ENCODE measurements at regions of chr3 and their contacts with region 1.

Region 1: DNA sequence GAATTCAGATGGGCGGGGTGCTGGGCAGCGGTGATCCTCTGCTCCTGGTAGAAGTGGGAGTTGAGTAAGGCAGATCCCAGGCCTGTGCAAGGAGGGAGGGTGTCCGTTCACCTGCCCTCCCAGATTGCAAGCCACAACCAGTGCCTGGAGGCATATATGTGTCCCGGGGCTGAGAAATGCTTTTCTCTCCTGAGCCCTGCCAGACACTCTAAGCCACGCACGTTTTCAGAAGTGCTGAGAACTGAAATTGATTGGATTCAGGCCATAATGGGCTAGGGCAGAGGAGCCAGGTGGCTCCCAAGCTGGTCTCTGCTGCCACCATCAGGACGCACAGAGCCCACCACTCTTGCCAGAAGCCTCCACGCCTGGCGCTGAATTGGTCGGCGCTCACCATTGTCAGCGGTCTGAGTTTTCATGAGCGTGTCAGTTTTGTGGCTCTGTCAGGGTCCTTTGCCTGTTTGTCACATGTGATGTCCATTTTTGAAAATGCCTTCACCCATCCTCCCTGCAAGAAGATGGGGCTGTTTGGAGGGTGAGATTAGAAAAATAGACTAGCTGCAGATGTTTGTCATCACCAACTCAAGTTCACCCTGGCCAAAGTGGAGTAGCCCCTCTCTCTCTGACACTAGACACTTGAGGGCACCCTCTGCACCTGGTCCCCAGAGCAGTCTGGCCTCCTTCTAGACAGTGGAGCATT is 15.4 kb upstream of the BFSP2 start:
- DNase-seq: peak; percentile 56 to 71
- H3K4me3 ChIP-seq: no peak overlapping the region
- H3K4me3 Mint-ChIP-seq: no peak overlapping the region
- H3K27ac Mint-ChIP-seq: no peak overlapping the region
- H3K4me1 ChIP-seq: no peaks in the 10 kb centered on the region
- H3K4me1 Mint-ChIP-seq: no peaks in the 10 kb centered on the region
- H3K27me3 ChIP-seq: no peaks in the 10 kb centered on the region
- H3K27me3 Mint-ChIP-seq: no peaks in the 10 kb centered on the region
- CTCF ChIP-seq: peak; percentile 72 to 88

Region 2: GRCh38 chr3:132535575-132536441 is 848.7 kb before region 1 on chr3:
- CTCF ChIA-PET with region 1: no interaction called
- POLR2A ChIA-PET with region 1: no interaction called
- intact Hi-C with region 1: loop called (anchors 10 kb)
- DNase-seq: peak; percentile 56 to 57
- H3K4me3 ChIP-seq: no peak overlapping the region
- H3K4me3 Mint-ChIP-seq: no peak overlapping the region
- H3K27ac Mint-ChIP-seq: no peak overlapping the region
- H3K4me1 ChIP-seq: no peaks in the 10 kb centered on the region
- H3K4me1 Mint-ChIP-seq: no peaks in the 10 kb centered on the region
- H3K27me3 ChIP-seq: no peaks in the 10 kb centered on the region
- H3K27me3 Mint-ChIP-seq: no peaks in the 10 kb centered on the region
- CTCF ChIP-seq: peak; percentile 59 to 63

Region 3: DNA sequence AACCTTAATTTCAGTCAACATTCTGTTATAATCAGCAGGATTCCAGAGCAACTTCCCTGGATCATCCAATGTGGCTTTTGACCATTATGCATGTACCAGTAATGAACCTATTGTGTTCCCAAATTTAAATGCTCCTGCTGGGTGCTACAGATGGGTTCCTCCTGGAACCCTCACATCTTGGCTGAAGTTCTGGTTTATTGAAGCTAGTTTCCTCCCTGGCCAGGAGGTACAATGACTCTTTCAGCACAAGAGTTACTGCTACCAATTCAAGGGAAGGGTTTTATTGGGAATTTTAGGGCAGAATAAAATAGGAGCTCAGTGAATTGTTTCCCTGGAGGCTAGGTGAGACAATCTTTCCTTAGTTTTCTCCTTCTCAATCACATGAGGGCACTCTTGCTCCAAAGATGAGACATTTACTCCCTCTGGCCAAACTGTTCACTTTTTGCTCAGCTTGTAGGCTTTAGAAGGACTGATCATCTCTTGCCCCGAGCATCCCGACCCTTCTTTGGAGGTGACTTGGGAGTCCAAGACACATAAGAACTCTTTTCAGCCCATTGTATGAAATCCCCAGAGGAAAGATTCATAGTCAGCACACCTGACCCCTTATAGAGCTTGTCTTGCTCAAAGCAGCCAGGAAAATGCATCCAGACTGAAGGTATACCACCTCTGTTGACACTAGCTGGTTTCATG is 653.4 kb before region 1 on chr3:
- CTCF ChIA-PET with region 1: interaction called, 6 read pairs
- POLR2A ChIA-PET with region 1: no interaction called
- intact Hi-C with region 1: loop called (anchors 2 kb)
- DNase-seq: peak in 1 of 2 experiments; percentile 47
- H3K4me3 ChIP-seq: no peak overlapping the region
- H3K4me3 Mint-ChIP-seq: no peak overlapping the region
- H3K27ac Mint-ChIP-seq: no peak overlapping the region
- H3K4me1 ChIP-seq: peaks cover 1% of the 10 kb centered on the region; the same call in 1 of the 2 replicates
- H3K4me1 Mint-ChIP-seq: no peaks in the 10 kb centered on the region
- H3K27me3 ChIP-seq: no peaks in the 10 kb centered on the region
- H3K27me3 Mint-ChIP-seq: peaks cover 8% of the 10 kb centered on the region
- CTCF ChIP-seq: peak in 1 of 2 experiments; percentile 44

Region 4: GRCh38 chr3:133271539-133271938 is 112.9 kb before region 1 on chr3:
- CTCF ChIA-PET with region 1: no interaction called
- POLR2A ChIA-PET with region 1: no interaction called
- intact Hi-C with region 1: loop called (anchors 5 kb)
- DNase-seq: no peak
- H3K4me3 ChIP-seq: no peak overlapping the region
- H3K4me3 Mint-ChIP-seq: no peak overlapping the region
- H3K27ac Mint-ChIP-seq: no peak overlapping the region
- H3K4me1 ChIP-seq: no peaks in the 10 kb centered on the region
- H3K4me1 Mint-ChIP-seq: no peaks in the 10 kb centered on the region
- H3K27me3 ChIP-seq: no peaks in the 10 kb centered on the region
- H3K27me3 Mint-ChIP-seq: peaks cover 8% of the 10 kb centered on the region
- CTCF ChIP-seq: no peak

Region 5: GRCh38 chr3:133426721-133427120 is 42.2 kb after region 1 on chr3:
- CTCF ChIA-PET with region 1: no interaction called
- POLR2A ChIA-PET with region 1: no interaction called
- intact Hi-C with region 1: loop called (anchors 1 kb)
- DNase-seq: no peak
- H3K4me3 ChIP-seq: no peak overlapping the region
- H3K4me3 Mint-ChIP-seq: no peak overlapping the region
- H3K27ac Mint-ChIP-seq: no peak overlapping the region
- H3K4me1 ChIP-seq: peaks cover 4% of the 10 kb centered on the region; the same call in 1 of the 2 replicates
- H3K4me1 Mint-ChIP-seq: no peaks in the 10 kb centered on the region
- H3K27me3 ChIP-seq: no peaks in the 10 kb centered on the region
- H3K27me3 Mint-ChIP-seq: no peaks in the 10 kb centered on the region
- CTCF ChIP-seq: no peak